ENCODE measurements at regions of chr14 and their contacts with region 1.

Region 1: DNA sequence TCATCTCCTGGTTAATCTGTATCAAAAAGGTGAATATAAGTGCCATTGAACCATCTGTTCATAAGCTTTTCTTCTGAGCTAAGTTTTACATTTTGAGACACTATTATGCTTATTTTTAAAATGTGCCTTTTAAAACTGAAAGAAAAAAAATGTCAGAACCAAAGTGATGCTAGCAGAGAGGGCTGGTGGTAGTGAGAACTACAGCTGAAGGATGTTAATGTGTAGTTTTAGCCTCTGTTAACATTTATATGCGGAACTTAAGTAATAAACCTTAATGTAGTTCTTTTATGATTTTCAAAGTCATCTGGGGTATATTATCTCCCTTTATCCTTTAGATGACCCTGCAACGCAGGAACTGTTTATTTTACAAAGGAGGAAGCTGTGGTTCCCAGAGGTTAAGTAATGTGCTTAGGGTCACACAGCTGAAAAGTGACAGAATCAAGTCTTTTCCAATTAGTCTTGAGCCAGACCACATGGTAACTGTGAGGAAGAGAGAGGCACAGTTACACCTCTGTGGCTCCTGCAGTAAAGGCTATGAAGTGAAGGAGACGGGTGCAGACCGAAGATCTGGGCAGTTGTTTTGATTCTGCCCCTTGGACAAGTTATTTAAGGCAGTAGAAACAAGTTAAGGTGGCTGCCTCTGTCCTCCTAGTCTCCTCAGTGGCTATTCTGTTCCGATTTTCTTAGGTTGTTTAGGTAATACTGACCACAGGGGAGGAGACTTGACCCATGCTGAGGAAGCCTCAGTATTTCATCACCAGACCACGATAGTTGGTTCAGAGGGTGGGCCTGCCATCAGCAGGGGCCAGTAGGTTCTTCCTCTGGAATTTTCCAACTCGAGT is 23.9 kb downstream of the GNG2 start:
- DNase-seq: peak; percentile 58
- H3K4me3 Mint-ChIP-seq: peak overlapping the region; percentile 51
- H3K27ac Mint-ChIP-seq: peak overlapping the region; percentile 46
- H3K4me1 Mint-ChIP-seq: peaks cover 37% of the 10 kb centered on the region
- H3K27me3 Mint-ChIP-seq: no peaks in the 10 kb centered on the region

Region 2: DNA sequence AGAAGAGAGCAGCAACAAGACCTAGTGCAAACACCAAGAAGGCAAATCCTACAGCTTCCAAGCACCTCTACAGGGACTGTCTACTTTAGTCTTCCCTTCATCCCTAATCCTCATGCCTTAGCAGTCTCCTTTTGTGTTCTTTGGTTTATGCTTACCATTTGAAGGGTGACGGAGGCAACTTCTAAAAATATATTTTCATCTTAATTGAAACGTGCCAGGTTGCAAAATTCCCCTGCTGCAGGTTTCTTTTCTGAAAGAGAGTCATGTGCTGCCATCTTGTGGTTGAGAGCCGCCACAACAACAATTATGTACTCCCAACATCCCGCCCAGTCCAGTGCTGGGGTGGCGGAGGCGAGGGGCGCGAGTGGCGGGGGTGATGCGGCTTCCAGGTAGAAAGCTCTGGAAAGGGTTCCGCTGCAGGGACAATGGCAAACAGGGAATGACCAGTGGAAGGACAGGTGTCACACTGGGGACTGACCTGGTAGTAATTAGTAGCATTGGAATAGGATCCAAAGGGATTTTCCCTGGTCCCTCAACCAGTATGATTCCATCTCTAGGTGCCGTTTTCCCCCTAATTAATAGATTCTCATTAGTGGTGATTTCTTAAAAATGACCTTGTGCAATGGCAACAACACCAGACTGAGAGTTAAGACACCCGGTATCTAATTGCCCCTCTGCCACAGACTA is 104.2 kb before region 1 on chr14:
- intact Hi-C with region 1: no loop called
- DNase-seq: peak; percentile 91
- H3K4me3 Mint-ChIP-seq: peak overlapping the region; percentile 30
- H3K27ac Mint-ChIP-seq: no peak overlapping the region
- H3K4me1 Mint-ChIP-seq: peaks cover 12% of the 10 kb centered on the region
- H3K27me3 Mint-ChIP-seq: peaks cover 40% of the 10 kb centered on the region

Region 3: GRCh38 chr14:51860164-51860824 is 24.0 kb before region 1 on chr14 and contains the start of gene GNG2:
- intact Hi-C with region 1: loop called (anchors 1 kb)
- DNase-seq: peak; percentile 95
- H3K4me3 Mint-ChIP-seq: peak within 1 kb of the TSS; percentile 99
- H3K27ac Mint-ChIP-seq: peak within 1 kb of the TSS; percentile 92
- H3K4me1 Mint-ChIP-seq: peaks cover 51% of the 10 kb centered on the region
- H3K27me3 Mint-ChIP-seq: no peaks in the 10 kb centered on the region
- total RNA-seq, gene GNG2: 104 and 105 TPM in 2 replicates